ENCODE measurements at regions of chr6 and their contacts with region 1.

Region 1: DNA sequence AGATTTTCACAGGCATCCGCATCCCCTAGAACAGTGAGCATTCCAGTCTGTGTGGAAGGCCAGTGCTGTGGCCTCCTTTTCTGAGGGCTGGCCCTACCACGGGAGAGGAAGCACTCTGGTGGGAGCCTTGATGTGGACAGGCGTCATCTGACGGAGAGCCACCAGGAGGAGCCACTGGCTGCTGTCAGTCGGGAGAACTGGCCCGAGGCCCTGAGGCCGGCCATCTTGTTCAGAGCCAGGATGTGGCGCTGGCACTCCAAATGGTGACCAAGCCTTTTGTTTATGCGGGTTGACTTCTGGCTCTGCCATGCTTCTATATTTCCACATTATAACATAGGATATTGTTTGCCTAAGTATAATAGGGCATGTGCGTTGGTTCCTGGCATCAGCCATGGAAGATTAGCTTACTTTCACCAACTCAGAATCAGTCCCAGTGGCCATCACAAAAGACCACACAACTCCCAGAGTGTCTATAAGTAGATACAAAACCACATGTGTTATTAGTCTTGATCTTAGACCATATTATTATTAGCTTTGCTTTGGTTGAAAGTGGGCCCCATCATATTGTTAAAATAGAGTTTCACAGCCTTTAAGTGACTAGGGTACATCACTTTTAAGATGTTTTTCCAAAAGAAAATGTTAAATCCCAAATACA is 273.9 kb upstream of the TAB2 start:
- DNase-seq: peak in 1 of 3 donors; percentile 36
- H3K4me3 ChIP-seq: no peak overlapping the region
- H3K27ac ChIP-seq: no peak overlapping the region
- H3K4me1 ChIP-seq: peaks cover 9 to 30% (median 16%) of the 10 kb centered on the region in 4 experiments
- H3K27me3 ChIP-seq: no peaks in the 10 kb centered on the region

Region 2: GRCh38 chr6:149020319-149020718 is 23.3 kb before region 1 on chr6:
- CTCF ChIA-PET with region 1: no interaction called
- POLR2A ChIA-PET with region 1: no interaction called
- DNase-seq: no peak
- H3K4me3 ChIP-seq: no peak overlapping the region
- H3K27ac ChIP-seq: no peak overlapping the region
- H3K4me1 ChIP-seq: peaks cover under 1 to 13% (median 9%) of the 10 kb centered on the region in 4 experiments
- H3K27me3 ChIP-seq: no peaks in the 10 kb centered on the region

Region 3: GRCh38 chr6:149065658-149066556 is 22.3 kb after region 1 on chr6:
- CTCF ChIA-PET with region 1: interaction called, 22 read pairs
- POLR2A ChIA-PET with region 1: no interaction called
- DNase-seq: peak; percentile 66 to 92 (median 91)
- H3K4me3 ChIP-seq: peak overlapping the region in 3 of 7 experiments; percentile 4 to 46 (median 33)
- H3K27ac ChIP-seq: peak overlapping the region in 1 of 2 experiments; percentile 68
- H3K4me1 ChIP-seq: peaks cover 8 to 33% (median 21%) of the 10 kb centered on the region in 4 experiments
- H3K27me3 ChIP-seq: no peaks in the 10 kb centered on the region

Measured in common myeloid progenitor, CD34-positive (primary cell).